ENCODE measurements at regions of chr16 and their contacts with region 1.

Region 1: DNA sequence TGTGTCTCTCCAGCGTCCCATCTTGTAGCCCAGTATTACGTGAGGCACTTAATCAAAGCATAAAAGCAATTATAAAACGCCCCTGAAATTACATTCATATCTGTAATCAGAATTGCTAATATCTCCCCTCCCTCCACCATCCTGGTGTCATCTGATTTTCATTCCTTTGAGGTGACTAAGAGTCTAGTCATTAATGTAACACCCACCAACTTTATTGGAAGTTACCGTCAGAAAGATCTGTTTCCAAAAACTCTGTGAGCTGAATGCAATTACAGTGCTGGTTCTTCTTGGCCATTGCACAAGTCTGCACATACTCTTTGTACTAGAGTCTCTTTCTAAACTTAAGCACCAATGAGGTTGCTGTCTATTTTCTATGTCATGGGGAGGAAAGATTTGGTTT is 12.5 kb upstream of the MAF start:
- DNase-seq: no peak
- ATAC-seq: peak; percentile 75
- H3K4me3 Mint-ChIP-seq: no peak overlapping the region
- H3K27ac Mint-ChIP-seq: no peak overlapping the region
- H3K4me1 Mint-ChIP-seq: peaks cover 21% of the 10 kb centered on the region
- H3K27me3 Mint-ChIP-seq: peaks cover 10% of the 10 kb centered on the region

Region 2: DNA sequence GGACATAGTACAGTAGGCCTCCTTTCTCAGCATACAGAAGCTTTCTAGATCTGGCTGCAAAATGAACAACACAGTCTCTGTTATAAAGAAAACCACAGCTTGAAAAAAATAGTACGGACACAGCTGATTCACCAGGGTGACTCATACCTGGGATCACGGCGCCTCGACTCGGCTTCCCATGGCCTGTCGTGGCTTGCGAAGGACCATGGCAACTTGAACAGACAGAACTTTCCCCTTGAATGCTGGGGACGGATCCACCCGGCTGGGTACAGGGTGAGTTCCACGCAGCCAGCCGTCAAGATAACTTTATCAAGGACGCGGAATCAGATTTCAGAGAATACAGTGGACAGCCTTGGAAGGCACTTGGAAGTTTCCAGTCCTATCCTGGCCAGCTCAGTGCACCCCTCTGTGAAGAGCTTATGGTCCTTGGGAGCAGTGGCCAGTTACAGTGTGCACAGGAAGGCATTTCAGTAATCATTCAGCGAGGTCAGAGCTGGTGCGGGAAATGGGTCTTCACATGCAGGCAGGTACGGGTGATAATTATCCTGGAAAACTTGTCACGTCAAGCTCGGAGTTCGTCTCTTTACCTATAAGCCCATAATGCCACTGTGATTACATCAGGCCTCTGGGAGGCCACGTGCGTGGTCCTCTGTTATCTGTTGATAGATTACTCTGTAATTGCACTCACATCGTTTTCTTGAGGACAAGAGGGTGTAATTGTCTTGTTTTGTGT is 45.5 kb after region 1 on chr16:
- CTCF ChIA-PET with region 1: no interaction called
- POLR2A ChIA-PET with region 1: no interaction called
- intact Hi-C with region 1: no loop called
- DNase-seq: peak; percentile 18
- ATAC-seq: peak; percentile 36
- H3K4me3 Mint-ChIP-seq: no peak overlapping the region
- H3K27ac Mint-ChIP-seq: no peak overlapping the region
- H3K4me1 Mint-ChIP-seq: no peaks in the 10 kb centered on the region
- H3K27me3 Mint-ChIP-seq: peaks cover 2% of the 10 kb centered on the region

Region 3: DNA sequence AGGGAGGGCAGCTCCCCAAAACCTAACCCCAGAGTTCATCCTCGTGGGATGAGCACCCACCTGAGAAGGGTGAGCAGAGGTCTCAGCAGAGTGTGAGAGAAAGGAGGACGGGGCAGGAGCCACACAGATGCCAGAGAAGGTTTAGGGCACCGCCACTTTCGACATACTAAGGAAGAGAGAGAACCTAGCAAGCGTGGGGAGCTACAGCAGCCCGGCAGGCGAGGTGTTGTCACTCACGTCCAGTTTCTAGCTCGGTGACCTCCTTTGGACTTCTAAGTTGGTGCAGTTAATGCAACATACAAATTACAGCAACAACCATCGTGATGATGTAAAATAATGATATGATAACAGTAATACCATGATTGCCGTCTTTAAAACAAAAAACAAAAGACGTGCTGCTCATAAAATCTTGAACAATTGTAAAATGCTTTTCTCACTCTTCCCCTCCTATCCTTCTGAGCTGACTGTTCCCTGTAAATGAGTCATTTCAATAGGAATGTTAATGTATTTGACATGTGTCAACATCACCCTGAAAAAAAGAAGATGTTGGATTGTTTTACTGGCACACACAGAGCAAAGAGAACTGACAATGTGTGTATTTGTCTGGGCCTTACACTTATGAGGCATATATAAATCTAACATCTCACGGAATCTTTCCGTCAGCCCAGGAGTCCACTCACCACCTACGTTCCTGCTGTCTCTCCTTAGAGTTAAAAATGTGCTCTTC is 145.8 kb after region 1 on chr16:
- CTCF ChIA-PET with region 1: interaction called, 3 read pairs
- POLR2A ChIA-PET with region 1: no interaction called
- intact Hi-C with region 1: loop called in 1 of 2 experiments (anchors 5 kb)
- DNase-seq: no peak
- ATAC-seq: no peak
- H3K4me3 Mint-ChIP-seq: no peak overlapping the region
- H3K27ac Mint-ChIP-seq: no peak overlapping the region
- H3K4me1 Mint-ChIP-seq: peaks cover 37% of the 10 kb centered on the region
- H3K27me3 Mint-ChIP-seq: peaks cover 9% of the 10 kb centered on the region

Region 4: GRCh38 chr16:79871906-79872305 is 258.9 kb after region 1 on chr16:
- CTCF ChIA-PET with region 1: no interaction called
- POLR2A ChIA-PET with region 1: no interaction called
- intact Hi-C with region 1: no loop called
- DNase-seq: no peak
- ATAC-seq: no peak
- H3K4me3 Mint-ChIP-seq: no peak overlapping the region
- H3K27ac Mint-ChIP-seq: no peak overlapping the region
- H3K4me1 Mint-ChIP-seq: no peaks in the 10 kb centered on the region
- H3K27me3 Mint-ChIP-seq: no peaks in the 10 kb centered on the region